ENCODE measurements at regions of chr6 and their contacts with region 1.

Region 1: GRCh38 chr6:118908441-118908840 is 14.5 kb downstream of the ASF1A start:
- H3K4me3 ChIP-seq: no peak overlapping the region
- H3K27ac ChIP-seq: no peak overlapping the region
- H3K4me1 ChIP-seq: no peaks in the 10 kb centered on the region
- CTCF ChIP-seq: no peak

Region 2: GRCh38 chr6:118893807-118894424 is 14.5 kb before region 1 on chr6 and contains the start of gene ASF1A:
- CTCF ChIA-PET with region 1: interaction called, 17 read pairs
- POLR2A ChIA-PET with region 1: interaction called, 3 read pairs
- H3K4me3 ChIP-seq: peak within 1 kb of the TSS; percentile 94
- H3K27ac ChIP-seq: peak within 1 kb of the TSS; percentile 94
- H3K4me1 ChIP-seq: 0 out of 2 replicates have a peak, but pooled peaks cover 2% of the 10 kb centered on the region
- CTCF ChIP-seq: peak; percentile 73

Region 3: GRCh38 chr6:119237177-119237715 is 328.8 kb after region 1 on chr6:
- CTCF ChIA-PET with region 1: no interaction called
- POLR2A ChIA-PET with region 1: no interaction called
- H3K4me3 ChIP-seq: no peak overlapping the region
- H3K27ac ChIP-seq: no peak overlapping the region
- H3K4me1 ChIP-seq: peaks cover 4% of the 10 kb centered on the region
- CTCF ChIP-seq: no peak

Measured in HEK293 (cell line).